GM18951 (cell line): ENCODE measurements at regions of chr16 and their contacts with region 1.

Region 1: GRCh38 chr16:2656985-2657384 is 25.3 kb upstream of the KCTD5 start:
- POLR2A ChIP-seq: no peak

Region 2: GRCh38 chr16:2009789-2010510 is 647.0 kb before region 1 on chr16 and contains the start of gene ZNF598:
- in situ Hi-C with region 1: no loop called
- POLR2A ChIP-seq: peak; percentile 96

Region 3: GRCh38 chr16:2537453-2538379 is 119.3 kb before region 1 on chr16 and contains the start of gene PDPK1:
- in situ Hi-C with region 1: loop called (anchors 10 kb)
- POLR2A ChIP-seq: peak; percentile 78

Region 4: DNA sequence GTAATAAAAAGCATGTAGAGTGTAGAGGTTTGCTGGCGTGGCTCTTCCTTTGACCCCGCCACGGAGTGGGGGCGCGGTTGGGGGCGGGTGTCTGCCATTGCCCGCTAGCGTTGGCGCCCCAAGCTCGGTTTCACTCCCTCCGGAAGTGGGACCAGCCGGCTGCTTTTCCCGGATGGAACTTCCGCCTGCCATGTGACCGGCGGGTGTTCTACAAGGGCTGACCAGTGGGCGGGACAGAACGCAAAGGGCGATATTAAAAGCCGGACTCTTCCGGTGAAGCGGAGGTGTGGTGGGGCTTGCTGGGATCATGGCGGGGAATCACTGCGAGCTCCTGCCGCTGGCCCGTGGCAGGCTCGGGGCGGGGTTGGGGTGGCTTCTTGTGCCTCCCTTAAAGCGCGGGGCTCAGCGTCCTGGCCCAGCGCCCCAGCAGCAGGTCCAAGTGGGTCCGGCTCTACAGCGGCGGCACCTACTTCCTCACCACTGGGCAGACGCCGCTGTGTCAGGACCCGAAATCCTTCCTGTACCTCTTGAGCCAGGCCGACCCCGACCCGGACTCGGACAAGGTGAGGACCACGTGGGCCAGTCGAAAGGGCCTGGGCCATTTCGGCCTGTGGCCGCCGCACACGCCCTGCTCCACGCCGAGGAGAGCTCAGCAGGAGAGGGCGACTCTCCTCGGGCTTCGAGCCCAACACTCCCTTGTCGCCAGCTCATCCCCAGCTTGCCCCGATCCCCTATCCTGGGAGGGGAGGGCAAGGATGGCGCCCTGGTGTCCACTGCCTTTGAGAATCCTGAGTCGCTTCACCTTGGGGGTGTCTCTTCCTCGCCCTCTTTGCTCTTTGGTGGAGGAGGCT is 53.6 kb before region 1 on chr16:
- in situ Hi-C with region 1: no loop called
- POLR2A ChIP-seq: peak; percentile 98